Naive thymus-derived CD4-positive, alpha-beta T cell (primary cell): ENCODE measurements at regions of chr19 and their contacts with region 1.

Region 1: GRCh38 chr19:49896863-49897621 is at the start of gene IL4I1:
- DNase-seq: peak in 8 of 9 donors; percentile 15 to 62 (median 38)
- ATAC-seq: peak; percentile 72
- H3K4me3 ChIP-seq: peak within 1 kb of the TSS; percentile 36
- H3K4me3 Mint-ChIP-seq: peak within 1 kb of the TSS; percentile 26 to 81 (median 74)
- H3K27ac ChIP-seq: peak within 1 kb of the TSS; percentile 56
- H3K27ac Mint-ChIP-seq: peak within 1 kb of the TSS; percentile 79 to 97 (median 91)
- H3K4me1 ChIP-seq: peaks cover 18 to 19% of the 10 kb centered on the region in 2 donors
- H3K4me1 Mint-ChIP-seq: peaks cover 15 to 41% (median 23%) of the 10 kb centered on the region in 7 donors
- H3K27me3 ChIP-seq: no peaks in the 10 kb centered on the region
- H3K27me3 Mint-ChIP-seq: no peaks in the 10 kb centered on the region
- total RNA-seq, gene IL4I1: 1.2 to 6.8 (median 1.9) TPM

Region 2: DNA sequence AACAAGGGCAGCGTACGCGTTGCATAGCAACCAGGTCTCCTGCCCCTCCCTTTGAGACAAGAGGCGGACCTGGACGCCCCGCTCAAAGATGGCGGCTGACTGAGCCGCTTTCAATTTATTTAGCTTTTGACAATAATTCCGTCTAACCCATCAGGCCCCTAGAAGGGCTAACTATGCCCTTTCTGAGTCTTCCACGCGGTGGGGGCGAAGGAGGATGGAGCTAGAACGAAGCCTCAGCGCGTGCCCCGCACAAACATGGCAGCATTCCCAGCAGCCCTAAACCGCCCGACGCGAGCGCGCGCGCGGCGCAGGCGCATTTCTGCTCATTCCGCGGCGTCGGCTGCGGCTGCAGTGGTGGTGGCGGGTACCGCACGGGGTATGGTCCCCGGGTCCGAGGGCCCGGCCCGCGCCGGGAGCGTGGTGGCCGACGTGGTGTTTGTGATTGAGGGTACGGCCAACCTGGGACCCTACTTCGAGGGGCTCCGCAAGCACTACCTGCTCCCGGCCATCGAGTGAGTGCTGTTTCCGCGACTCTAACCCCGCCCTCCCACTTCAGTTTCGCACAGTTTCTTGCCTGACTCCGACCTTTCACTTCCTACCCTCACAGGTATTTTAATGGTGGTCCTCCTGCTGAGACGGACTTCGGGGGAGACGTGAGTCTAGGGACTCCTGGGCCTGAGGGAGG is 78.9 kb before region 1 on chr19 and contains the start of gene MED25:
- CTCF ChIA-PET with region 1: no interaction called
- POLR2A ChIA-PET with region 1: no interaction called
- intact Hi-C with region 1: no loop called
- DNase-seq: peak; percentile 87 to 96 (median 94)
- ATAC-seq: peak; percentile 65
- H3K4me3 ChIP-seq: peak within 1 kb of the TSS; percentile 91
- H3K4me3 Mint-ChIP-seq: peak within 1 kb of the TSS; percentile 94 to 100 (median 98)
- H3K27ac ChIP-seq: peak within 1 kb of the TSS; percentile 88
- H3K27ac Mint-ChIP-seq: peak within 1 kb of the TSS; percentile 96 to 100 (median 100)
- H3K4me1 ChIP-seq: peaks cover 11 to 17% of the 10 kb centered on the region in 2 donors
- H3K4me1 Mint-ChIP-seq: peaks cover 20 to 51% (median 39%) of the 10 kb centered on the region in 7 donors
- H3K27me3 ChIP-seq: no peaks in the 10 kb centered on the region
- H3K27me3 Mint-ChIP-seq: no peaks in the 10 kb centered on the region
- total RNA-seq, gene MED25: 36.8 to 75.2 (median 55.4) TPM

Region 3: DNA sequence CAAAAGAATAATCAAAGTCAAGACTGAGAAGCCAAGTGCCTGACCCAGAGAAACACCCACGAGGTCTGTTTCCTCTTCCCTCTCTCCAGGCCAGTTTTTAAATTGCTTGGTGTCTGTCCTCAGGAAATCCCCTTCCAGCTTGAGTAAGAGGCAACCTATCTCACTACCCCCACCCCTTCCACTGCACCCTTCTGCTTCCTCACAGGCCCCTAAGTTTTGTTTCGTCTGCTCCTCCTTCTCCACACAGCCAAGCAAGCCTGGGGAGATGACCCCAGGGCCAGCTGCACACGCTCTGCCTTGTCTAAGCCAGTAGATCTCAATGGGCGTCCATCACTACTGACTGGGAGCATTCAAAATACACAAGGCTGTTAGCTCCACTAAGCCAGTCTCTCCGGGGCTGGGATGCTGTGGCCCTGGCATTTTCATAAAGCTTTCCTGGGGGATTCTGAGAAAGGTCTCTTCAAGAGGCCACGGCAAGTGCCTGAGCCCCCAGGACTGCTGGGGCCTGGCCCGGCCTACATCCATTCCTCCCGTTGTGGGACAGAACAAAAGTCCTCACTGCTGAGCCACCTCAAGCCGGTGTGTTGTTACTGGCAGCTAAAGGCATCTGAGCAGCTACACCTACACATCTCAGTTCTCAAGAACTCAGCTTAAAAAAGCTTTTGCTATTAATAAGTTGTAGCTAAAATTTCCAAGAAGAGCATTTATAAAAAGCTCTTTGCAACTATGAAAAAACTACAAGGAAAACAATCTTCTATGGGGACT is 14.5 kb after region 1 on chr19:
- CTCF ChIA-PET with region 1: no interaction called
- POLR2A ChIA-PET with region 1: no interaction called
- intact Hi-C with region 1: loop called in 1 of 2 experiments (anchors 2 kb)
- DNase-seq: peak in 1 of 9 donors; percentile 36
- ATAC-seq: peak; percentile 89
- H3K4me3 ChIP-seq: no peak overlapping the region
- H3K4me3 Mint-ChIP-seq: peak overlapping the region in 1 of 10 donors; percentile 65
- H3K27ac ChIP-seq: peak overlapping the region; percentile 47
- H3K27ac Mint-ChIP-seq: peak overlapping the region; percentile 45 to 91 (median 79)
- H3K4me1 ChIP-seq: no peaks in the 10 kb centered on the region
- H3K4me1 Mint-ChIP-seq: peaks cover 16 to 53% (median 22%) of the 10 kb centered on the region in 7 donors
- H3K27me3 ChIP-seq: no peaks in the 10 kb centered on the region
- H3K27me3 Mint-ChIP-seq: no peaks in the 10 kb centered on the region